ENCODE measurements at regions of chr17 and their contacts with region 1.

Region 1: GRCh38 chr17:50865984-50866774 is at the start of gene TOB1:
- DNase-seq: peak; percentile 99
- ATAC-seq: peak; percentile 76
- H3K4me3 ChIP-seq: peak within 1 kb of the TSS; percentile 85
- H3K27ac ChIP-seq: peak within 1 kb of the TSS; percentile 87
- H3K4me1 ChIP-seq: peaks cover 39% of the 10 kb centered on the region
- H3K27me3 ChIP-seq: no peaks in the 10 kb centered on the region
- CTCF ChIP-seq: no peak
- total RNA-seq, gene TOB1: 28.7 and 39.3 TPM in 2 replicates

Region 2: GRCh38 chr17:50785946-50786570 is 80.1 kb before region 1 on chr17:
- CTCF ChIA-PET with region 1: no interaction called
- POLR2A ChIA-PET with region 1: no interaction called
- intact Hi-C with region 1: no loop called
- DNase-seq: no peak
- ATAC-seq: no peak
- H3K4me3 ChIP-seq: no peak overlapping the region
- H3K27ac ChIP-seq: no peak overlapping the region
- H3K4me1 ChIP-seq: no peaks in the 10 kb centered on the region
- H3K27me3 ChIP-seq: no peaks in the 10 kb centered on the region
- CTCF ChIP-seq: no peak

Region 3: GRCh38 chr17:50806141-50806643 is 60.0 kb before region 1 on chr17:
- CTCF ChIA-PET with region 1: no interaction called
- POLR2A ChIA-PET with region 1: no interaction called
- intact Hi-C with region 1: no loop called
- DNase-seq: peak; percentile 34
- ATAC-seq: no peak
- H3K4me3 ChIP-seq: no peak overlapping the region
- H3K27ac ChIP-seq: no peak overlapping the region
- H3K4me1 ChIP-seq: no peaks in the 10 kb centered on the region
- H3K27me3 ChIP-seq: no peaks in the 10 kb centered on the region
- CTCF ChIP-seq: peak; percentile 42

Region 4: DNA sequence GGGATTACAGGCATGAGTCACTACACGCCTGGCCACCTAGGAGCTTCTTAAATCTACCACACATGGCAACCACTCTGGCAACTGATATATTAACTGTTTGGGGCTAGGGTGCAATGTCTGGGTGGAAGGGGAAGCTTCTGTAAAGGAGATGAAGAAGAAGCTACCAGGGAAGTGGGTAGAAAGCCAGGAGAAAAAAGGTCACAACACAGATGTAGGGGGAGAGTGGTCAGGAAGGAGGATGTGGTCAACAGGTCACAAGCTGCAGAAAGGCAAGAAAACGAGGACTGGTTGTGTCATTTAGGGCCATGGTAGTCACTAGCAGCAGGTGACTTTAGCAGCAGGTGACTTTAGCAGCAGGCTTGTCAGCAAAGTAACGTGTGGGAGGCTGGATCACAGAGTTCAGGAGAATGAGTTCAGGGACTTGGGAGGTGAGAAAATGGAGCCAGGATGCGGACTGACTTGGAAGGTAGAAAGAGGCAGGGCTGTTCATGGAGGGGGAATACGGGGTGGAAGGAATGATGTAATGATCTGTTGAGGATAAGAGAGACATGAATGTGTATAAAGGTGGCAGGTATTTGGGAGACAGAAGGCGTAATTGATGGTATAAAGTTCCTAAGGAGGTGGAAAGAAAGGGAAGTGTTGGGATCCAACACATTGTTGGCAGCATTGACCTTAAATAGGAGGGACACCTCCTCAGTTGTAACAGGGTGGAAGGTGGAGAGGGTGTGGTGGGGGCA is 47.1 kb before region 1 on chr17:
- CTCF ChIA-PET with region 1: no interaction called
- POLR2A ChIA-PET with region 1: interaction called, 22 read pairs
- intact Hi-C with region 1: no loop called
- DNase-seq: no peak
- ATAC-seq: no peak
- H3K4me3 ChIP-seq: no peak overlapping the region
- H3K27ac ChIP-seq: no peak overlapping the region
- H3K4me1 ChIP-seq: peaks cover 11% of the 10 kb centered on the region
- H3K27me3 ChIP-seq: no peaks in the 10 kb centered on the region
- CTCF ChIP-seq: no peak

Region 5: GRCh38 chr17:50883850-50884438 is 17.8 kb after region 1 on chr17:
- CTCF ChIA-PET with region 1: no interaction called
- POLR2A ChIA-PET with region 1: interaction called, 16 read pairs
- intact Hi-C with region 1: no loop called
- DNase-seq: no peak
- ATAC-seq: no peak
- H3K4me3 ChIP-seq: no peak overlapping the region
- H3K27ac ChIP-seq: no peak overlapping the region
- H3K4me1 ChIP-seq: peaks cover 7% of the 10 kb centered on the region
- H3K27me3 ChIP-seq: no peaks in the 10 kb centered on the region
- CTCF ChIP-seq: no peak

Region 6: DNA sequence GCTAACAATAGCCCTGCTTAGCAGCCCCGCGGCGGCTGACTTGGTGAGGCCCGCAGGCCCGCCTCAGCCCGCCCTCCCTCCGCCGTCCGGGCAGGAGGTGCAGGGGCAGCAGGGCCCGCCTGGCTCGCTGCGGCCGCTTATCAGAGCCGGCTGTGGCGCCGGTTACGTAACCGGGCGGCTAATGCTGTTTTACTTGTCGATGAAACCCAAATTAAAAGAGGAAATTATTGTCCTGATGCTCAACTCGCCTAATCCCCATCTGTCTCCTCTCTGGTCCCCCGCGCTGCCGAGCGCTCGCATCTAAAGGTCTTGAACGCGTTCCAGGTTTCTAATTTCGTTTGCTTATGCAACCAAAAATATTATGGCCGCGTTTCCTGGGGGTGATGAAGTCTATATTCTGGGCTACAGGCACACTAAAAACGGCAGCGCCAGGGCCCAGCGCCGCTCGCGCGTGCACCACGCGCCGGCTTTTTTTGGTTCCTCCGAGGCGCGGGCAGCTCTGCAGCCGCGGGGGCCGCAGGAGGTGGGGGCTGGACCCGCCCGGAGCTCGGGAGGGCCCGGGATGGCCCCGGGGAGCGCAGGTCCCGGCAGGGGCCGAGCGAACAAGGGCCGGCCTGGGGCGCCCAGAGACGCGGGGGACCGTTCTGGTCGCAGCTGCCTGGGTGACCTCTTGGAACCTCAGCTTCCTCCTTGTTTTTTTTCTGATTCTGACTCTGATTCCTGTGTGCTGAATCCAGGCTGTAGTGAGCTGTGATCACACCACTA is 65.1 kb after region 1 on chr17:
- CTCF ChIA-PET with region 1: no interaction called
- POLR2A ChIA-PET with region 1: interaction called, 12 read pairs
- intact Hi-C with region 1: no loop called
- DNase-seq: peak; percentile 75
- ATAC-seq: peak; percentile 83
- H3K4me3 ChIP-seq: peak overlapping the region; percentile 67
- H3K27ac ChIP-seq: peak overlapping the region; percentile 19
- H3K4me1 ChIP-seq: peaks cover 37% of the 10 kb centered on the region
- H3K27me3 ChIP-seq: no peaks in the 10 kb centered on the region
- CTCF ChIP-seq: no peak

Region 7: DNA sequence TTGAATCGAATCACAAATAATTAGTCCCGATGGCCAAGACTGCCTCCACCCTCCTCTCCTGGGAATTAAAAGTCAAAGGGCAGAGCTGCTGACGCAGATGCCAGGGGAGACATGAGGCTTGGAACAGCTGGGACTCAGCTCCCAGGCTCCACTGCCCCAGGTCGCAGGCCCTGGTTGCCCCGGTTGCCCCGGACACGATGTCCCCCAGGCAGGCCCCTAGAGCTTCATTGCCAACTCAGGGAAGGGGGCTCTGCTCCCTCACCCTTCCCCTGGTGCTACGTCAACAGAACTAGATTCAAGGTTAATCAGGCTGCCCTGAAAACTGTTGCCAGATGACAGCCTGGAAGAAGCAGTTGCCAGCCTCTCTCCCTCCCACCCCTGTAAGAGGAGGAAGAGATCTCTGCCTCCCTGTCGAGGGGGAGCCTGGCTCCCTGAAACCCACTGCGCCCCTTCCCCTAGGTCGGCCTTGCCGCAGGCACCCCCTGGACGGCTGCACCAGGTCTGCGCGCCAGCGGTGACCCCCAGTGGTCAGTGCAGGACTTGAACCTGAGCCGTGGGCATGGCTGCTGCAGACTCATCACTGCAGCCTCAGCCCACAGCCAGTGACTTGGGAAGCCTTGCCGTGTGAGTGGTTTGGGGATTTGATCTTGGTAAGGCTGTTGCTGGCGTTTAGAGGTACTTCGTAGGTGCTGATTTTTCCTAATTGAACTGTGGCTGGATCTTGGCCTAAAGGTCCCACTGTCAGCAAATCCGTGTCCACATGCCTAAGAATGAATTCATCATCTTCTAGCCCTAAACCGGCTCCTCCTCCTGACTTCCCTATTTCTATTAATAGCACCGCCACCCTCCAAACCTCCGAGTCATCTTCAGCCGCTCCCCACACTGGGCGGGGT is 84.1 kb after region 1 on chr17:
- CTCF ChIA-PET with region 1: interaction called, 12 read pairs
- POLR2A ChIA-PET with region 1: interaction called, 17 read pairs
- intact Hi-C with region 1: loop called (anchors 1 kb)
- DNase-seq: peak; percentile 96
- ATAC-seq: peak; percentile 82
- H3K4me3 ChIP-seq: peak overlapping the region; percentile 28; the same call in 1 of the 2 replicates
- H3K27ac ChIP-seq: peak overlapping the region; percentile 78
- H3K4me1 ChIP-seq: peaks cover 38% of the 10 kb centered on the region
- H3K27me3 ChIP-seq: no peaks in the 10 kb centered on the region
- CTCF ChIP-seq: peak; percentile 99

Region 8: DNA sequence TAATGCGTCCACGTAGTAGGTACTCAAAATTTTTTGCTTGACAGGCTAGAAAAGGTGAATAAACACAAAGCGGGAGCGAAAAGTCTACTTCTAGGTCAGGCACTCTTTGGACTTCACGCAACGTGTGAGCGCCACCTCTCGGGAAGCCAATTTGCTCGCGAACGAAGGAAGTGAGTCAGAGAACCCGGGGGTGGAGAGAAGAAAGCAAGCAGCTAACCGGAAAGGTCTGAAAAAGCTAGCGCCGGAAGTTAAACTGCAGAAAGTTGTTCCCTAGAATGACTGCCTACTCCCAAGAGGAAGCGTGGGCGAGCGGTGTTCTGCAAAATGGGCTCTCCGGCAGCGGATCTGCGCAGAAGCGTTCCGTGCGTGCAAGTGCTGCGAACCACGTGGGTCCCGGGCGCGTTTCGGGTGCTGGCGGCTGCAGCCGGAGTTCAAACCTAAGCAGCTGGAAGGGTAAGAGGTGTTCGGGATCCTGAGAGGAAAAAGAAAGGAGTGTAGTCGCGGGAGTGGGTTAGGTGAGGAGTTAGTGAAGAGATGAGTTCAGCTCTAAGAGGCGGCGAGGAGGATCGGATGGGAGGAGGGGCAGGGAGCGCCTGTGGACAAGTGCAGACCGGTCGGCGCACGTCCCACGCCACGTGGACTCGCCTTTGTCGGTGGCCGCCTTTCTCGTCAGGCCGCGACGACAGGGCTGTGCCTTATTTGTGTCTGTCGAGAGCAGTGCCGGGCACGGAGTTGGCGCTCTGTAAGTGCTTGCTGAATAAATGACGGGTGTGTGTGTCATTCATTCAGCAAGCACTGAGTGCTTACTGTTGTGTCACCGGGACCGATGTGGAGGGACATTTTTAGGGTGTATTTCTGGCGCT is 287.3 kb after region 1 on chr17 and contains the start of gene NME1:
- CTCF ChIA-PET with region 1: no interaction called
- POLR2A ChIA-PET with region 1: interaction called, 11 read pairs
- intact Hi-C with region 1: loop called (anchors 5 kb)
- DNase-seq: peak; percentile 100
- ATAC-seq: peak; percentile 91
- H3K4me3 ChIP-seq: peak within 1 kb of the TSS; percentile 87
- H3K27ac ChIP-seq: peak within 1 kb of the TSS; percentile 74
- H3K4me1 ChIP-seq: peaks cover 21% of the 10 kb centered on the region
- H3K27me3 ChIP-seq: no peaks in the 10 kb centered on the region
- CTCF ChIP-seq: peak; percentile 98
- total RNA-seq, gene NME1: 538 and 592 TPM in 2 replicates